Heart right ventricle (tissue), 16 donors: ENCODE measurements at regions of chr9 and their contacts with region 1.

Region 1: DNA sequence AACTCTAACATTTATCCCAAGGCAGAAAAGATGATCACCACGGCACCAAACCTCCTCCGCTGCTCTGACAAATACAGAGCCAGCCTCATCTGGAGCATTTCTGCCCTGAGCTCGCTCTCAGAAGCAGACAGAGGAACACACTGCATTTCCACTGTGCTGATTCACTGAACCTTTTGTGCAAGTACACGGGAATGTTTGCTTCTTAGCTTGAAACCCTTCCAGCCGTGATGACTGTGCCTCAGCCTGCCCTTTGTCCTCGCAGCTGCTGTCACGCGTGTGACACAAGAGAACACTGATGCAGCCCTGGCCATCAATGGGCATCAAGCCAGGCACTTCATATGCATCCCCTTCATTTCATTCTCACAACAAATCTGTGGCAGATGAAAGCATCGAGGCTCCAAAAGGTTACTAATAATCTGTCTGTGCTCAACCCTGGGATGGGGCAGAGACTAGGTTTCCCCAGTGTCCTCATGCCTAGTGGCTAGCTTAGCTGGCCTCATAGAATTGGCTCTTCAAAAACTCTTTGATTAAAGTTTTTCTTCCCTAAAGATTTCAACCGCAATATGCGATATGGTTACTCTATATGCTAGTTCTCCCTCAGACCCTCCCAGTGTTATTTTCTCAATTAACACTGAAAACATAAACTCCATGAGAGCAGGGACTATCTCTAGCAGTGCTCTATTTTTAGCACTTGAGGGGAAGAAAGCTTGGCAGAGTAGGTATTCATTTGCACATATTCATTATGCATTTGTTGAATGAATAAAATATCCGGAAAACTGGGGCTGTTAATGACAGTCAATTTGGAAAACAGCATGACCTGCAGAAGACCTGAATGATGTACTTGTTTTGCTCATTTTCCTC is 7.3 kb downstream of the CDC14B start:
- DNase-seq: peak; percentile 34 to 39
- ATAC-seq: peak; percentile 57 to 96 (median 83)
- H3K4me3 ChIP-seq: peak overlapping the region in 3 of 10 donors; percentile 12 to 21 (median 14)
- H3K27ac ChIP-seq: peak overlapping the region; percentile 2 to 77 (median 67)
- H3K4me1 ChIP-seq: peaks cover 0 to 35% (median 13%) of the 10 kb centered on the region in 9 donors
- H3K27me3 ChIP-seq: peaks cover 0 to 21% (median 0%) of the 10 kb centered on the region in 7 donors
- CTCF ChIP-seq: no peak

Region 2: DNA sequence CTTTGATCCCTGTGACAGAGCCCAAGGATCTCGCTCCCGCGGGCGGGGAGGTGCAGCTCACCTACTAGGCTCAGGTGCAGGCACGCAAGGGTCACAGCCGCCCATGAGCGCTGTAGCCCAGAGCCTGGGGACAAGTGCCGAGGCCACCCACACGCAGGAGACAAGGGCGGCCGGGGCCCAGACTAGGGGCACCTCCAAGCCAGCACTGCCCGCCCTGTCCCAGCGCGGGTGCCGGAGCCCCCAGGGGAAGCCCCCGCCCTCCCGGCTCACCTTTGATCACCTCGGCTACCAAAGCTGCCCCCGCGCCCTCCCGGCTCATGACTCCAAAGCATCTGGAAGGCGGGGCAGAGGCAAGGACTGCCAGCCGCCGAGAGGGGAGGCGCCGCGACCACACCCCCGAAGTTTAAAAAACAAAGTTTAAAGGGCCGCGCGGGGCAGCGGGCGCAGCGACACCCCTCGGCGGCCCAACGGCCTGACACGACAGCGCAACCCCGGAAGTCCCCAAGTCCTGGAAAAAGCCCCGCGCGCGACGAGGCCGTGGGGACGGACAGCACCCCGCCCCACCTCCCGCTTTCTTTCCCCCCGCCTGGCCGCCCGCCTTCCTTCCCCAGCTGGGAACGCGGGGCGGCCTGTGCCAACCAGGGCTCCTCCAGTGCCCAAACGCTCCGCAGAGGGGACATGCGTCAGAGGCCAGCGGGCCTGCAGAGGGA is 45.7 kb before region 1 on chr9:
- intact Hi-C with region 1: loop called in 6 of 10 experiments (anchors 5 to 10 kb)
- DNase-seq: peak; percentile 81 to 83
- ATAC-seq: peak; percentile 92 to 95 (median 94)
- H3K4me3 ChIP-seq: peak overlapping the region; percentile 53 to 91 (median 81)
- H3K27ac ChIP-seq: peak overlapping the region; percentile 81 to 95 (median 86)
- H3K4me1 ChIP-seq: peaks cover 0 to 34% (median 20%) of the 10 kb centered on the region in 9 donors
- H3K27me3 ChIP-seq: peaks cover 0 to 4% (median 0%) of the 10 kb centered on the region in 7 donors
- CTCF ChIP-seq: peak; percentile 52 to 87 (median 71)

Region 3: GRCh38 chr9:96574931-96575351 is 37.4 kb before region 1 on chr9:
- intact Hi-C with region 1: loop called in 1 of 10 experiments (anchors 5 kb)
- DNase-seq: no peak
- ATAC-seq: peak in 4 of 8 donors; percentile 37 to 80 (median 64)
- H3K4me3 ChIP-seq: no peak overlapping the region
- H3K27ac ChIP-seq: no peak overlapping the region
- H3K4me1 ChIP-seq: peaks cover 0 to 3% (median 0%) of the 10 kb centered on the region in 9 donors
- H3K27me3 ChIP-seq: peaks cover 0 to 9% (median 0%) of the 10 kb centered on the region in 7 donors
- CTCF ChIP-seq: no peak

Region 4: GRCh38 chr9:96782235-96782634 is 169.9 kb after region 1 on chr9:
- intact Hi-C with region 1: no loop called
- DNase-seq: no peak
- ATAC-seq: no peak
- H3K4me3 ChIP-seq: no peak overlapping the region
- H3K27ac ChIP-seq: no peak overlapping the region
- H3K4me1 ChIP-seq: peaks cover 0 to 18% (median 12%) of the 10 kb centered on the region in 9 donors
- H3K27me3 ChIP-seq: no peaks in the 10 kb centered on the region
- CTCF ChIP-seq: no peak